GM10248 (cell line): ENCODE measurements at regions of chr2 and their contacts with region 1.

Region 1: GRCh38 chr2:186641807-186642321 is 52.0 kb upstream of the FAM171B start:
- DNase-seq: peak; percentile 46
- CTCF ChIP-seq: peak; percentile 71

Region 2: DNA sequence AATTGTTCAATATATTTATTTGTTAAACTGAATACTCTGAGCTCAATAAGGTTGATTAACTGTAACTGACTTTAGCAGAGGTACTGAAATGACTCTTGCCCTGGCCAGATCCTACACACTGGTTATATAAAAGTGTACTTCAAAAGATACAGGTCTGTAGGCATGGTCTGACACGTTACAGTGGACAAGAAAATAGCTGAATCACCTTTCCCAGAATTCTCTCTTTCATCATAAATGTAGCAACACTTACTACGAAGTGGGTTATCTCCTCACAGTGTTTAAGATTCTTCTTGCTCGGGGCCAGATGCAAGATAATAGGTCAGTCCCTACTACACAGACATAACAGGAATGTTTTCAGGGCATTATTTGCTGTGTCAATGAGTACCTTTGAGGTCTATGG is 262.8 kb before region 1 on chr2:
- CTCF ChIA-PET with region 1: no interaction called
- POLR2A ChIA-PET with region 1: no interaction called
- DNase-seq: no peak
- CTCF ChIP-seq: no peak

Region 3: DNA sequence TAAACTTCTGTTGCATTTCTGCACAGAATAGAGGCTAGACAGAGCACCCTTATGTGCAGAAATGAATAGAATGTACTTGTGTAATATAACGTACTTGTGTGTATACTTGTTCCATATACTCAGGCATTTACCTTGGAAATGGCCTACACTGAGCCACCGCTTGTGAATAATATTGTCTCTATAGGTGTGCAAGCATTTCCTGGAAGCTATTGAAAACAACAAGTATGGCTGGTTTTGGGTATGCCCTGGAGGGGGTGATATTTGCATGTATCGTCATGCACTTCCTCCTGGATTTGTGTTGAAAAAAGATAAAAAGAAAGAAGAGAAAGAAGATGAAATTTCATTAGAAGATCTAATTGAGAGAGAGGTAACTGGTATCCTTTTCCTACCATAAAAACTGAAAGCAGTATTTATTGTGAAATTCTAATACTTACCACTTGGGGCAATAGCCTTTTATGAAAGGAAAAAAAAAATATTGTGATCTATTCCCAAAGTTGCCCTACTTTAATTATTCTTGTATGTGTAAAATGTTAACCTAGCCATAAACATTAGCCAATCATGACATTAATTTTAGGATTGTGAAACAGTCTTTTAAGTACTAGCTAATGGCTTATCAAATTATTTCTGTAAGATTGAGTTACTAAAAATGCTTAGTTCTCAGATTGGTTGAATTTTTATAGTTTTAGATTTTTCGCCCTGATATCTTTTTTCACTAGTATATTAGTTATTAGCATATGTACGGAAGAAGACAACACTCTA is 137.8 kb before region 1 on chr2:
- CTCF ChIA-PET with region 1: interaction called, 80 read pairs
- POLR2A ChIA-PET with region 1: no interaction called
- DNase-seq: peak; percentile 15
- CTCF ChIP-seq: peak; percentile 39

Region 4: GRCh38 chr2:186607660-186608324 is 34.1 kb before region 1 on chr2:
- CTCF ChIA-PET with region 1: interaction called, 10 read pairs
- POLR2A ChIA-PET with region 1: no interaction called
- DNase-seq: no peak
- CTCF ChIP-seq: no peak

Region 5: DNA sequence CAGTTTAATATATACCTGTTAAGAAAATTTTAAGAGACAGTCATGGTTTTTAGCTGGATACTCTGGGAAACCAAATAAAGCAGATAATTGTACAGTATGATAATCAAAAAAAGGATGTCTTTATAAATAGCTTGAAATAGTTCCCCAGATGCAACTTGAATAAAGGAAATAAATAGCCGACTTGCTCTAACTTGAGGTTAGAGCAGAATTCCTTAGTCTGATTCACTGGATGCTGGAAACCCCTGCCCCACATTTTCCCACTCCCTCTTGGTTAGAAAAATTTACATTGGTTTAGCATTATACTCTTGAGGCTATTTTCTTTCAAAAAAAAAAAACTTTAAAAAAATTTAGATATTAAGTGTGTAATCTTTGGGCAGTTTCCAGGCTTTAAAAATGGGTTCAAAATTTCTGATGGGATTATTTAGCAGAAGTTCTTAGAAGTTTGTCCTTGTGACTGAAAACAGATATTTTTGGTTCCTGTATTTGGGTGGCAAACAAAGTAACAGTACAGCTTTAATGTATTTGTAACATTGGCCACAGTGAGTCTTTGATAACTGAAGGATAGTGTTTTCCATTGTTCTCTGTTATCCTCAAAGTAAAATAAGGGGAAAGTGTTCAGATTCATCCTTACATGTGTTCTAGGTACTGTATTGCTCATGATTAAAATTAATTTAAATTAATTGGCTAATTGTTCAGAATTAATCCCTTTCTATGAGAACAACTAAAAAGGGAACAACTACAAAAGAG is 12.4 kb before region 1 on chr2:
- CTCF ChIA-PET with region 1: interaction called, 10 read pairs
- POLR2A ChIA-PET with region 1: no interaction called
- DNase-seq: no peak
- CTCF ChIP-seq: no peak